Activated B cell treated with CpG ODN at 0.5 μM for 24 hours (primary cell): ENCODE measurements at regions of chr14 and their contacts with region 1.

Region 1: DNA sequence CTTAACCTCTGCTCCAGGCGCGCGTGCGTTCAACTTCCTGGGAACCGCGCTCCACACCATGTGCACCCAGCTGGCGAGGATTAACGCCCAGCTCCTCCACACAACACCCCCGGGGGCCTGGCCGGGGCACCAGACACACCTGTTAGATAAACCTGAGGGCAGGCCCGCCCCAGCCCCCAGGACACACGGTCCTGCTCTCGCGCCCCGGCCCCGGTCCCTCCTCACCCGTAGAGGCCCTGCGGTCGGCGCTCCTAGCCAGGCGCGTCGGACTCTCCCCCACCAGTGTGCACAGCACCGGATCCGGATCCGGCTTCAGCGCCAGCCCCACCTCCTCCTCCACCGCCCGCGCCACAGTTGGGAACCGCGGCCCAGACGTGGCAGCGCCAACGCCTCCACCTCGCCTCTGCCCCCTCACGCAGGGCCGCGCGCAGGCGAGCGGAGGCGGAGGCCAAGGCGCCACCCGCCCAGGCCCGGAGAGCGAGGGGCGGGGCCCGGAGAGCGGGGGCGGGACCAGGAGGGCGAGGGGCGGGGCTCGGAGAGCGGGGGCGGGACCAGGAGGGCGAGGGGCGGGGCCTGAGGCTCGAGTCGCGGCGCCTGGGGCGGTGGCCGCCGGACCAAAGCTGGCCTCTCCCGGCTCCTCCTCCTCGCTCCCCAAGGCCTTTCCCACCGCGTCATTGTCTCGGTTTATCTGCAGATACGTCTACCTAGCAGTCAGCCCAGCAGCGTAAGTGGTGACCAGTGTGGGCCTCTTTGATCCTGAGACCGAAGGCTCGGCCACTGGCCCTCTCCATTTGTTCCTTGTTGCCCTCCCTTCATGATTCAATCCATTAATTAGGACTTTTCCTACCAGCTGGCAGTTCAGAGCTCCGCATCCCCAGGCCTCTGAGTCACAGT is at the start of gene GNPNAT1:
- DNase-seq: peak; percentile 79
- ATAC-seq: peak; percentile 96
- H3K4me3 Mint-ChIP-seq: peak within 1 kb of the TSS; percentile 91
- H3K27ac Mint-ChIP-seq: peak within 1 kb of the TSS; percentile 77
- H3K4me1 Mint-ChIP-seq: peaks cover 27% of the 10 kb centered on the region
- H3K27me3 Mint-ChIP-seq: no peaks in the 10 kb centered on the region
- CTCF ChIP-seq: no peak
- total RNA-seq, gene GNPNAT1: 9.7 and 11.4 TPM in 2 replicates

Region 2: DNA sequence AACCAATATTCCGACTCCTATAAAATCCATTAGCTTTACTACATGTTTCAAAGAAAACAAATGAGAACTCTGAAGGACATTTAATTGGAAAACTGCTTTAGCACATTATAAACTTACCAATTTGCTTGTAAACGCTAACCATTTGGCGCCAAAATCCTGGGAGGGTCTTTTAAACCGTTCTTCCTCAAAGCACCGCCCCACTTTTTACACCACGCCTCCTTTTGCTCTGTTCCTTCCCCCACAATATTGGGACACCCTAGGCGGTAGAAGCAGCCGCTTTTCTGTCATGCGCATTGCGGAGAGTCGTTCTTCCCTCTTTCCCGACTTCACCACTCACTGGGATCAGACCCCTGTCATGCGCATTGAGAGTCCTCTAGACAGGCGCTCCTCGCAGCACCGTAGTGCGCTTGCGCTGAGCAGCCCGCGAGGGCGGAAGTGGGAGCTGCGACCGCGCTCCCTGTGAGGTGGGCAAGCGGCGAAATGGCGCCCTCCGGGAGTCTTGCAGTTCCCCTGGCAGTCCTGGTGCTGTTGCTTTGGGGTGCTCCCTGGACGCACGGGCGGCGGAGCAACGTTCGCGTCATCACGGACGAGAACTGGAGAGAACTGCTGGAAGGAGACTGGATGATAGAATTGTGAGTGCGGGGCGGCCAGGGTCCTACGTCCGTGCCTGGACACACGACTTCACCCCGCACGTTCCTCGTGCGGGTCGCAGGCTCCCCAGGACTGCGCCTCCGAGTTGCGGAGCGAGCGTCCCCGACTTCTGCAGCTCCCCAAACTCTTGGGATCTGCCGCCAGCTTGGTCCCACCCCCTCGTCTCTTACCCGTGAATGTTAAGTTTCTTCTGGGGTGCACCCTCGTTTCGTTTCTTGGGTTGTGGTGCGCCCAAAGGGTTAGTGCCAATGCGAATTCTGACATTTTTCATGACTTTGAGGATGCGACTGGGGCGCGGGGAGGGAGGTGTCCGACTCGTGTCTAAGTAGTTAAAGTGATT is 1551.3 kb before region 1 on chr14 and contains the start of gene TMX1:
- CTCF ChIA-PET with region 1: no interaction called
- POLR2A ChIA-PET with region 1: no interaction called
- intact Hi-C with region 1: loop called (anchors 10 kb)
- DNase-seq: peak; percentile 83
- ATAC-seq: peak; percentile 92
- H3K4me3 Mint-ChIP-seq: no peak within 1 kb of the TSS
- H3K27ac Mint-ChIP-seq: no peak within 1 kb of the TSS
- H3K4me1 Mint-ChIP-seq: peaks cover 12% of the 10 kb centered on the region
- H3K27me3 Mint-ChIP-seq: no peaks in the 10 kb centered on the region
- CTCF ChIP-seq: no peak
- total RNA-seq, gene TMX1: 24.6 and 25.3 TPM in 2 replicates

Region 3: GRCh38 chr14:52313903-52314594 is 477.4 kb before region 1 on chr14 and contains the start of gene PTGER2:
- CTCF ChIA-PET with region 1: no interaction called
- POLR2A ChIA-PET with region 1: no interaction called
- intact Hi-C with region 1: loop called (anchors 5 kb)
- DNase-seq: peak; percentile 44
- ATAC-seq: peak; percentile 55
- H3K4me3 Mint-ChIP-seq: peak within 1 kb of the TSS; percentile 88
- H3K27ac Mint-ChIP-seq: peak within 1 kb of the TSS; percentile 4
- H3K4me1 Mint-ChIP-seq: peaks cover 50% of the 10 kb centered on the region
- H3K27me3 Mint-ChIP-seq: peaks cover 50% of the 10 kb centered on the region
- CTCF ChIP-seq: no peak
- total RNA-seq, gene PTGER2: 0.09 and 0.12 TPM in 2 replicates

Region 4: DNA sequence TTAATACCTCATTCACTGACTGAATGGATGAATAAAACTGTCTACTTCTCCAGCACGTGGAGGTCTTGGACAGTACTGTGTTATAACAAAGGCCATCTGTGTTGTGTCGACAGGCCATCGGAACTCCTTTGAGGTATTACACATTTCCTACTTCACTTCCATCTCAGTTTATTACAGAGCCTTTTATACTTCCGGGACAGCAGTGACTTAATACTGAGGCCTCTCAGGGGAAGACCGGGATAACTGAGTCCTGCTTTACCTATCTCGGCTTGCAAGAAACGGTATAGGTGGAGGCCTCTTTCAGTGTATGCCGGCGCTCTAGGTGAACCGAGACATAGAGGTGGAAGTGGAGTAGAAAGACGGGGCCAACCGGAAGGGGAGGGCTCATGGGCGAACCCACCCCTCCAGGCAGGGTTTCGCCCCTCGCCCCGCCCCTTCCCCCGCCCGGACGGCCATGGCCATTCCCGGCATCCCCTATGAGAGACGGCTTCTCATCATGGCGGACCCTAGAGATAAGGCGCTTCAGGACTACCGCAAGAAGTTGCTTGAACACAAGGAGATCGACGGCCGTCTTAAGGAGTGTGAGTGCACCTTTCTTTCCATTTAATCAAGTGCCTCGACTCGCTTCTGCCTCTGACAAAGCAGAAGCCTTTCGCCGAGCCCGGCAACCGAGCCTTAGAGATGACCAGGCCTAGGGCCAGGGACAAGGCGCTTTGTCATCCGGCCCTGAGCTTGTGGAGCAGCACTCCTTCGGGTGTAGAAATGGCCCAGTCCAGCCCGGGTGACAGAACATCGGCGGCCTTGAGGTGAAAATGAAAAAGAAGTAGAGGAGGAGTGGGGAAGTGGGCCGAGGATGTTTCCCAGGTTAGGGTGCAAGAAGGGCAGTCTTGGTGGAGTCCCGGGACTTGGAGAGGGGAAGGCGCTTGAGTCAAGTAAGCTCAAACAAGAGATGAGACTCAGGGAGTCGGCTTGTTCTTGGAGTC is 84.4 kb before region 1 on chr14 and contains the start of gene PSMC6:
- CTCF ChIA-PET with region 1: no interaction called
- POLR2A ChIA-PET with region 1: no interaction called
- intact Hi-C with region 1: loop called (anchors 2 kb)
- DNase-seq: peak; percentile 85
- ATAC-seq: peak; percentile 99
- H3K4me3 Mint-ChIP-seq: peak within 1 kb of the TSS; percentile 99
- H3K27ac Mint-ChIP-seq: peak within 1 kb of the TSS; percentile 98
- H3K4me1 Mint-ChIP-seq: peaks cover 25% of the 10 kb centered on the region
- H3K27me3 Mint-ChIP-seq: peaks cover 2% of the 10 kb centered on the region
- CTCF ChIP-seq: no peak
- total RNA-seq, gene PSMC6: 94.8 and 97.6 TPM in 2 replicates

Region 5: GRCh38 chr14:53217295-53217994 is 426.0 kb after region 1 on chr14:
- CTCF ChIA-PET with region 1: no interaction called
- POLR2A ChIA-PET with region 1: no interaction called
- intact Hi-C with region 1: loop called (anchors 2 kb)
- DNase-seq: peak; percentile 78
- ATAC-seq: peak; percentile 98
- H3K4me3 Mint-ChIP-seq: peak overlapping the region; percentile 87
- H3K27ac Mint-ChIP-seq: peak overlapping the region; percentile 76
- H3K4me1 Mint-ChIP-seq: peaks cover 6% of the 10 kb centered on the region
- H3K27me3 Mint-ChIP-seq: no peaks in the 10 kb centered on the region
- CTCF ChIP-seq: no peak

Region 6: GRCh38 chr14:54509546-54510501 is 1718.4 kb after region 1 on chr14 and contains the start of gene CGRRF1:
- CTCF ChIA-PET with region 1: no interaction called
- POLR2A ChIA-PET with region 1: no interaction called
- intact Hi-C with region 1: loop called (anchors 5 kb)
- DNase-seq: peak; percentile 98
- ATAC-seq: peak; percentile 98
- H3K4me3 Mint-ChIP-seq: peak within 1 kb of the TSS; percentile 95
- H3K27ac Mint-ChIP-seq: peak within 1 kb of the TSS; percentile 89
- H3K4me1 Mint-ChIP-seq: peaks cover 41% of the 10 kb centered on the region
- H3K27me3 Mint-ChIP-seq: no peaks in the 10 kb centered on the region
- CTCF ChIP-seq: no peak
- total RNA-seq, gene CGRRF1: 11.9 and 14.1 TPM in 2 replicates